ENCODE measurements at regions of chr14 and their contacts with region 1.

Region 1: GRCh38 chr14:51834240-51834639 is 26.2 kb upstream of the GNG2 start:
- DNase-seq: no peak
- H3K4me3 Mint-ChIP-seq: no peak overlapping the region
- H3K27ac Mint-ChIP-seq: no peak overlapping the region
- H3K4me1 Mint-ChIP-seq: no peaks in the 10 kb centered on the region
- H3K27me3 Mint-ChIP-seq: no peaks in the 10 kb centered on the region
- CTCF ChIP-seq: no peak

Region 2: GRCh38 chr14:51167587-51168214 is 666.5 kb before region 1 on chr14:
- CTCF ChIA-PET with region 1: no interaction called
- intact Hi-C with region 1: no loop called
- DNase-seq: no peak
- H3K4me3 Mint-ChIP-seq: no peak overlapping the region
- H3K27ac Mint-ChIP-seq: no peak overlapping the region
- H3K4me1 Mint-ChIP-seq: no peaks in the 10 kb centered on the region
- H3K27me3 Mint-ChIP-seq: peaks cover 4% of the 10 kb centered on the region
- CTCF ChIP-seq: no peak

Region 3: DNA sequence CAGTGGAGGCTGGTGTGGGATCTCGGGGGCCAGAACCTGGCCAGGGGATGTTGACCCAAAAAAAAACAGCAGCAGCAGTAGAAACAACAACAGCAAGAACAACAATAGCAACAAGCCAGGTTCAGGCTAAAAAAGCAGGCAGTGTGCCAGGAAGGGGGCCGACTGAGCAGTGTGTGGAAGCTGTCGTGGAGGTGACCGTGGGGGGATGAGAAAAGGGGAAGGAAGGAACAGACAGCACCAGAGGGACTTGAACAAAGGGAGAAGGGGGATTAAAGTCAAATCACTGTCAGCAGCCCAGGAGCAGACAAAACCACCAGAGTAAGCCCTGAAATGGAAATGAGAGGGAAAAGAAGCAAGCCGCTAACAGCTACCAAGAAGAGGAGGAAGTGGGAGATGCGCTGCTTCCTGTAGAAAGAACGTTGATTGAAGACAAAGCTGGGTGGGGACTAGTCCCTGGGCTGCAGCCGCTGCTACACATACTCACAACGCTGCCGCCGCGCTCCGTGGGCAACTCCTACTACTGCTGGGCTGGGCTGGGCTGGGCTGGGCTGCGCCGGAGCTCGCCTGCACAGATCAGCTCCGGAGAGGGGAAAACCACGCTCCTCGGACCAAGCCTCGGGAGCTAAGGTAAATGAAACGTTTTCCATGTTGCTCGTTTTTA is 26.1 kb after region 1 on chr14 and contains the start of gene GNG2:
- CTCF ChIA-PET with region 1: no interaction called
- intact Hi-C with region 1: loop called (anchors 1 kb)
- DNase-seq: peak; percentile 21
- H3K4me3 Mint-ChIP-seq: peak within 1 kb of the TSS; percentile 33
- H3K27ac Mint-ChIP-seq: no peak within 1 kb of the TSS
- H3K4me1 Mint-ChIP-seq: peaks cover 15% of the 10 kb centered on the region
- H3K27me3 Mint-ChIP-seq: peaks cover 19% of the 10 kb centered on the region
- CTCF ChIP-seq: no peak
- total RNA-seq, gene GNG2: not detected in 2 replicates

Region 4: GRCh38 chr14:51873221-51873893 is 39.1 kb after region 1 on chr14:
- CTCF ChIA-PET with region 1: no interaction called
- intact Hi-C with region 1: loop called (anchors 5 kb)
- DNase-seq: peak; percentile 34
- H3K4me3 Mint-ChIP-seq: no peak overlapping the region
- H3K27ac Mint-ChIP-seq: peak overlapping the region; percentile 75
- H3K4me1 Mint-ChIP-seq: peaks cover 9% of the 10 kb centered on the region
- H3K27me3 Mint-ChIP-seq: no peaks in the 10 kb centered on the region
- CTCF ChIP-seq: no peak